Activated CD8-positive, alpha-beta T cell treated with anti-CD3 and anti-CD28 coated beads, Interleukin-2, amount 10 ng/mL, durations not matched to agents 7 days and 5 days (primary cell): ENCODE measurements at regions of chr11 and their contacts with region 1.

Region 1: GRCh38 chr11:95231127-95231880 is at the start of gene SESN3:
- DNase-seq: peak; percentile 99
- ATAC-seq: peak; percentile 96
- H3K4me3 Mint-ChIP-seq: no peak within 1 kb of the TSS
- H3K27ac Mint-ChIP-seq: peak within 1 kb of the TSS; percentile 86
- H3K4me1 Mint-ChIP-seq: peaks cover 44% of the 10 kb centered on the region
- H3K27me3 Mint-ChIP-seq: peaks cover 2% of the 10 kb centered on the region
- total RNA-seq, gene SESN3: 29.1 to 31.5 TPM

Region 2: GRCh38 chr11:95089620-95090542 is 141.4 kb before region 1 on chr11 and contains the start of gene ENDOD1:
- CTCF ChIA-PET with region 1: interaction called, 3 read pairs
- POLR2A ChIA-PET with region 1: interaction called, 17 read pairs
- DNase-seq: peak; percentile 88
- ATAC-seq: peak; percentile 96
- H3K4me3 Mint-ChIP-seq: peak within 1 kb of the TSS; percentile 90
- H3K27ac Mint-ChIP-seq: peak within 1 kb of the TSS; percentile 99
- H3K4me1 Mint-ChIP-seq: peaks cover 66% of the 10 kb centered on the region
- H3K27me3 Mint-ChIP-seq: no peaks in the 10 kb centered on the region
- total RNA-seq, gene ENDOD1: 23.4 to 23.9 TPM

Region 3: GRCh38 chr11:95182397-95182796 is 48.9 kb before region 1 on chr11:
- CTCF ChIA-PET with region 1: no interaction called
- POLR2A ChIA-PET with region 1: no interaction called
- DNase-seq: no peak
- ATAC-seq: no peak
- H3K4me3 Mint-ChIP-seq: no peak overlapping the region
- H3K27ac Mint-ChIP-seq: no peak overlapping the region
- H3K4me1 Mint-ChIP-seq: no peaks in the 10 kb centered on the region
- H3K27me3 Mint-ChIP-seq: no peaks in the 10 kb centered on the region

Region 4: GRCh38 chr11:95248666-95249467 is 17.6 kb after region 1 on chr11:
- CTCF ChIA-PET with region 1: interaction called, 45 read pairs
- POLR2A ChIA-PET with region 1: interaction called, 72 read pairs
- DNase-seq: no peak
- ATAC-seq: no peak
- H3K4me3 Mint-ChIP-seq: no peak overlapping the region
- H3K27ac Mint-ChIP-seq: no peak overlapping the region
- H3K4me1 Mint-ChIP-seq: peaks cover 13% of the 10 kb centered on the region
- H3K27me3 Mint-ChIP-seq: peaks cover 2% of the 10 kb centered on the region

Region 5: DNA sequence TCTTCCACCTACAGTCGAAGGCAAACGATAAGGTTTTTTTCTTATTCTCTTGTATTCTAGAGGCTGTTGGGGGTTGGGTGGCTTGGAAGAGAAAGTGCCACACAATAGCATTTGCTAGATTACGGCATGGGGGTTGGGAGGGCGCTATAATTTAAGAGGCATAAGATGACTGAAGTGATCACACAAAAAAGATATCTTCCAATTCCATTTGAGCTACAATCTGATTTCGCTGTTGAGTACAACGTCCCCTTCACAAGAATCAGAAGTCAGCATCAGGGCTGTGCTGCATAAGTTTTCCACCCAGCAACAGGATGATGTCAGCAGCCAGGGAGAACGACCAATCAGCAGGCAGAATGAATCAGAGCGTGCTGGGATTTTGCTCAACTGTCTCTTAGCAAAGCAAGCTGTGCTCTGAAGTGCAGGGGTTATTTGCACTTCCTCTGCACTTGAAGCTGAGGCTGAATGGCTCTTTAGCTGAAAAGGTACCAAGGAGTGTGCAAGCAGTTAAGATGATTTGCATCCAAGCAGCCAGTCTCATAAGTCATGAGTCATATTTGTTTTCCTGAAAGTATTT is 22.9 kb after region 1 on chr11:
- CTCF ChIA-PET with region 1: interaction called, 45 read pairs
- POLR2A ChIA-PET with region 1: interaction called, 72 read pairs
- DNase-seq: peak; percentile 91
- ATAC-seq: peak; percentile 100
- H3K4me3 Mint-ChIP-seq: peak overlapping the region; percentile 76
- H3K27ac Mint-ChIP-seq: peak overlapping the region; percentile 79
- H3K4me1 Mint-ChIP-seq: peaks cover 42% of the 10 kb centered on the region
- H3K27me3 Mint-ChIP-seq: peaks cover 2% of the 10 kb centered on the region

Region 6: DNA sequence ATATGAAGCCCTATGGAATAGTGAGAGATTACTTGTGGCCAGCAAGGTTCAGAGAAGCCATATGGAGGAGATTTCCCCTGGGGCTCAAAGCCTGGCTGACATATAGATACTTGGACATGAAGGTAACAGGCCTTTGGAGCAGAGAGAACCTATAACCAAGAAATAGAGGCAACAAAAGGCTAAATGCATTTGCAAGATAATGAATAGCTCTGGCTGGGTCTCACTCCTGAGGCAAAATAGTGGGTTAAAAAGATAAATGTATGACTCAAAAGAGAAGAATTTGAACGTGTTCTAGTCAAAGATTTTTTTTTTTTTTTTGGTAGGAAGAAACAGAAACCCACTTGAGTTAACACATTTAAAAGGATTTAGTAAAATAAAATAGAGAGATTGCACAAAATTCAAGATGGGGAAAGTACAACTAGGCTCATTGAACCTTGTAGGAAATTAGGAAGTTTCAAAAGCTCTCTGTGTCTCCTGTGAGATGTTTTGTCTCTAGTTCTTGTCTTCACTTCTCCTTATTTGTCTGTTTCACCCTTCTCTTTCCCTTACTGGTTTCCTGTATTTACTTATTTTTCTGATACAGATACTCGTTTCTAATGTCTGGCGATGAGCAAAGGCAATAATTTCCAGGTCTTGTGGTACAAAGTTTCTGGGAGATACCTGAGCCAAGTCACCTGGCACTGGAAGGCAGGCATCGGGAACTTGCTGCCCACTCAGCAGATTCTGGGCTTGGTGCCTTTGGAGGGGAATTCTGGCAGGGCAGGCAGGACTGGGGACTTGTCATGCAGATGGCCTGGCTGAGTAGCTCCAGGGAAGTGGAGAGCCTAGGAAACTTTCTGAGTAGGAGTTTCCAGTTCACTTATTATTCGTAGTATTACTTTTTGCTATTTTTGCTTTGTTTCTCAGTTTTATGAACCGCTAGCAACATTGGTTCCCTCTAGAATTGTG is 48.9 kb after region 1 on chr11:
- CTCF ChIA-PET with region 1: no interaction called
- POLR2A ChIA-PET with region 1: no interaction called
- DNase-seq: no peak
- ATAC-seq: no peak
- H3K4me3 Mint-ChIP-seq: no peak overlapping the region
- H3K27ac Mint-ChIP-seq: no peak overlapping the region
- H3K4me1 Mint-ChIP-seq: no peaks in the 10 kb centered on the region
- H3K27me3 Mint-ChIP-seq: peaks cover 7% of the 10 kb centered on the region

Region 7: DNA sequence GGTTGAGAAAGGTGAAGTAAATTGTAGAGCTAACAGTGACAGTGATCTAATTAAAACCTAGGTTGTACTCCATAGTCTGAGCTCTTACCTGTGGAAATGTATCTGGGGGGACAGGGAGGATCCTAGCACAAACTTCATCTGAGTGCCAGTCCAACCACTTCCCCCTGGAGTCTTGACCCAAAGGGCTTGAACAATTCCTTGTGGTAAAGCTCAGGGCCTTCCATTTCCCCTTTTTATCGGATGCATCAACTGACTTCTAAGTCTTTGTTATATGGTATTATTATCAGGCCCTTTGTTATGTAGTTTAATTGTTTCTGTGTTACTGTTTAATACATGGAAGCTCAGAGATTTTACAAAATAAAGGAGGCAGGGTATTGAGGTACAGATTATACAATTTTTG is 139.8 kb after region 1 on chr11:
- CTCF ChIA-PET with region 1: interaction called, 12 read pairs
- POLR2A ChIA-PET with region 1: no interaction called
- DNase-seq: no peak
- ATAC-seq: no peak
- H3K4me3 Mint-ChIP-seq: no peak overlapping the region
- H3K27ac Mint-ChIP-seq: no peak overlapping the region
- H3K4me1 Mint-ChIP-seq: no peaks in the 10 kb centered on the region
- H3K27me3 Mint-ChIP-seq: peaks cover 11% of the 10 kb centered on the region

Region 8: DNA sequence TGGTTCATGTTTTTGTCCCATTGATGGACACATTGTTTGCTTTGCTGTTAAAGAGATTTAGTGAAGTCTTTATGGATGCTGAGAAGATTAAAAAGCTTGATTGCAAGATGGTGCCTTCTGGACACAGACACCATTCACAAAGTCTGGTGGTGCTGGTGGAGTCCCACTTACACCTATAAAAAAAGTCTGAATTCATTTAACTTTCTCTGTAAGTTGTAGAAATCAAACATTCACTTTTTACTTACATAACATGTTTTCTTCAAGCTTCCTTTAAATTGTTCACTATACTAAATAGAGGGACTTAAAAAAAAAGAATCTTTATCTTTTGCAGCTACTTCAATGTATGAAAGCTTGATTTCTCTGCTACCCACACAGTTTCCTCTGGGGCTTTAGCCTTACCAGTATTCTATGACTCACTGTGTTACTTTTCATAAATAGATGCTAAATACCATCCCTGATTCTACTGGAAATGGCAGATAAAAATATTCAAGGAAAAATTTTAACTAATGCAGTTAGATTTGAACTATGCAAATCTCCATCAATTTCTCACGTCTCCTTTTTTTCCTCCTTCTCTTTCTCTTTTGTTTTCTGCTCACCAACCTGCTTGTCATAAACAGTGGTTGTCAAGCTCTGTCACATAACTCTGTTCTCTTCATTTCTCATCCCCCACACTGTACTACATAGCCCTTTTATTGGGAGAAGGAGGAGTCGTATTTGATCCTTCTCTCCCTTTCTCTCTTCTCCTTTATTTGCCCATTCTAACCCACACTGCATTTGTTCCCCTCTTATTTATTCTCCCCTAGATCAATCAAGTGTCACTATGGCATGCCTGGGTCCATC is 468.5 kb after region 1 on chr11:
- CTCF ChIA-PET with region 1: interaction called, 112 read pairs
- POLR2A ChIA-PET with region 1: interaction called, 19 read pairs
- DNase-seq: peak; percentile 33
- ATAC-seq: peak; percentile 64
- H3K4me3 Mint-ChIP-seq: peak overlapping the region; percentile 59
- H3K27ac Mint-ChIP-seq: peak overlapping the region; percentile 94
- H3K4me1 Mint-ChIP-seq: peaks cover 59% of the 10 kb centered on the region
- H3K27me3 Mint-ChIP-seq: no peaks in the 10 kb centered on the region

Region 9: GRCh38 chr11:95790123-95790932 is 559.0 kb after region 1 on chr11 and contains the start of gene CEP57:
- CTCF ChIA-PET with region 1: interaction called, 12 read pairs
- POLR2A ChIA-PET with region 1: interaction called, 26 read pairs
- DNase-seq: peak; percentile 97
- ATAC-seq: peak; percentile 69
- H3K4me3 Mint-ChIP-seq: peak within 1 kb of the TSS; percentile 99
- H3K27ac Mint-ChIP-seq: peak within 1 kb of the TSS; percentile 100
- H3K4me1 Mint-ChIP-seq: peaks cover 55% of the 10 kb centered on the region
- H3K27me3 Mint-ChIP-seq: no peaks in the 10 kb centered on the region
- total RNA-seq, gene CEP57: 85.4 to 86.6 TPM